Activated CD4-positive, alpha-beta T cell treated with anti-CD3 and anti-CD28 coated beads for 36 hours (primary cell): ENCODE measurements at regions of chr5 and their contacts with region 1.

Region 1: DNA sequence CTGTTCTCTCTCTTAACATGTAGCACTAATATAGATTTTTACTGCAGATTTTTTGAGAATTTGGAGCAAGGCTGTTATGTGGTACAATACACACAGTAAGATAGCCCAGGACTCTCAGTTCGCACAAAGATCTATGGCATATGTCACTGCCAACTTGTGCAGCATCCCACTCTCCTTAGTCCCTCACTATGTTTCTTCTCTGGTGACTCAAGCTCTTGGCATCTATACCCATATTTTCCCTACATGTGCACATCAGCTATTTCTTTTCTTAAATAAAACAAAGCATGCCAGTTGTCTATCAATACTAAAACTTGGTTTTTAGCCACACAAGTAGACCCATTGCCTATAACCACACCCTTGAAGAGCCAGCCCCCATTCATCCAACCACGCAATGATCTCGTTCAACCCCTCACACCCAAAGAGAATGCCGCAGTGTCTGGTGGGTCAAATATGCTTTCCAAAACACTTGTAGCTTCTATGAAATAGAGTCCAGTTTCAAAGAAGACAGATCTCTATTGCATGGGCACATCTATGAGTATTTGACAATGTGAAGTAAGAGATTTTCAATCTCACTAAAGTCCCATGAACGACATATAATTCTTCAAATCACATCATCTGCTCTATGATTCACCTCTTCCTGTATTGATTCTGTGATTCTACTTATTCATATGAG is 18.2 kb upstream of the IL7R start:
- DNase-seq: peak; percentile 69
- ATAC-seq: peak; percentile 65
- H3K4me3 Mint-ChIP-seq: peak overlapping the region; percentile 61
- H3K27ac Mint-ChIP-seq: peak overlapping the region; percentile 99
- H3K4me1 Mint-ChIP-seq: peaks cover 78% of the 10 kb centered on the region
- H3K27me3 Mint-ChIP-seq: no peaks in the 10 kb centered on the region

Region 2: DNA sequence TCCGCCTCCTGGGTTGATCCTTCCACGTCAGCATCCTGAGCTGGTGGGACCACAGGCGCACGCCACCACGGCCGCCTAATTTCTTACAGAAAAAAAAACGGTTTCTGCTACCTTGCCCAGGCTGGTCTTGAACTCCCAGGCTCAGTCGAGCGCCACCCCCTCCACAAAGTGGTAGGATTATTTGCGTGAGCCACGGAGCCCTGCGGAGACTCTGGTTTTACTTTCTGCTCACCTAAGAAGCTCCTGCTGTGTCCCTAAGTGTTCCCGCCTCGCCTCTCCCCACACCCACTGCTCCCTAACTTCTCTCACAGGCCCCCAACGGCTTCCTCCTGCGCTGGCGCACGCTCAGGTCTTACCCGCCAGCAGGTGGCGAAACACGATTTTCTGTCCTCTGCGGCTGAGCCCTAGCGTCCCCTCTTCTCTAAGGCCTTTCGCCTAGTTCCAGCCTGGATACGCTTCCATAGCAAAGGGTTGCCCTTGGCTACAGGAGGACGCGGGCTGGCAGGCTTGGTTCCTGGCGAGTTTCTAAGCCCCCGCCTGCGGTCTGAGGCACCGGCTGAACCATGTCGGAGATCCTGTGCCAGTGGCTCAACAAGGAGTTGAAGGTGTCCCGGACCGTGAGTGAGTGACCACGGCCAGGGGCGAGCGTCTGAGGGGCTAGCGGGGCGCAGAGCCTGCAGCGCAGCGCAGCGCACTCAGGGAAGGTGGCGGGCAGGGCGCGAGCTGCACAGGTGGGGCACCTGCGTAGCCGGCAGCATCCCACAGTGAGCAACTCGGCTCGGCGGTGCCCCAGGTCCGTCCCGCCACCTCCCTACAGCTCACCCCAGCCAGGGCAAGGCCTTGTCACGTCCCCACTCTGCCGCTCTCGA is 220.8 kb before region 1 on chr5 and contains the start of gene SPEF2:
- CTCF ChIA-PET with region 1: no interaction called
- POLR2A ChIA-PET with region 1: no interaction called
- intact Hi-C with region 1: loop called in 1 of 2 experiments (anchors 5 kb)
- DNase-seq: peak; percentile 91
- ATAC-seq: peak; percentile 92
- H3K4me3 Mint-ChIP-seq: peak within 1 kb of the TSS; percentile 83
- H3K27ac Mint-ChIP-seq: peak within 1 kb of the TSS; percentile 99
- H3K4me1 Mint-ChIP-seq: peaks cover 31% of the 10 kb centered on the region
- H3K27me3 Mint-ChIP-seq: no peaks in the 10 kb centered on the region
- total RNA-seq, gene SPEF2: 14.1 to 14.6 TPM

Region 3: DNA sequence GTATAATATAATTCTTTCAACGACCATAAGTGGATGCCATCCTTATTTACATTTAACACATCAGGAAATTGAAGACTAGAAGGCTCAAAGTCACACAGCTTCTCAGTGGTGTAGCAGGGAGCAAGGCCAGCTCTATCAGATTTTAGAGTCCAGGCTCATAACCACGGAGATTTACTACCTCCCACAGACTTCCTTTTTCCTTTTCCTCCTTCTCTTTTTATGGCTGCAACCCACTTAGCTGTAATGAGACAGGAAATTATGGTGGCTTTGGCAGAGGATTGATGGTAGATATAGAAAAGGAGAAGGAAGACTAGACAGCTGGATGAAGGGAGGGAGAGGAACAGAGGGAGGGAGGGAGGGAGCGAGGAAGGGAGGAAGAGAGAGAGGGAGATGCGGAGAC is 173.4 kb before region 1 on chr5:
- CTCF ChIA-PET with region 1: no interaction called
- POLR2A ChIA-PET with region 1: no interaction called
- intact Hi-C with region 1: loop called in 1 of 2 experiments (anchors 5 kb)
- DNase-seq: no peak
- ATAC-seq: no peak
- H3K4me3 Mint-ChIP-seq: no peak overlapping the region
- H3K27ac Mint-ChIP-seq: peak overlapping the region; percentile 7
- H3K4me1 Mint-ChIP-seq: peaks cover 55% of the 10 kb centered on the region
- H3K27me3 Mint-ChIP-seq: no peaks in the 10 kb centered on the region

Region 4: GRCh38 chr5:35794684-35795375 is 43.7 kb before region 1 on chr5:
- CTCF ChIA-PET with region 1: no interaction called
- POLR2A ChIA-PET with region 1: interaction called, 13 read pairs
- intact Hi-C with region 1: loop called in 1 of 2 experiments (anchors 1 kb)
- DNase-seq: peak; percentile 45
- ATAC-seq: peak; percentile 40
- H3K4me3 Mint-ChIP-seq: peak overlapping the region; percentile 25
- H3K27ac Mint-ChIP-seq: peak overlapping the region; percentile 91
- H3K4me1 Mint-ChIP-seq: peaks cover 90% of the 10 kb centered on the region
- H3K27me3 Mint-ChIP-seq: no peaks in the 10 kb centered on the region

Region 5: GRCh38 chr5:35822511-35822910 is 16.0 kb before region 1 on chr5:
- CTCF ChIA-PET with region 1: interaction called, 24 read pairs
- POLR2A ChIA-PET with region 1: interaction called, 8 read pairs
- intact Hi-C with region 1: loop called in 1 of 2 experiments (anchors 1 kb)
- DNase-seq: peak; percentile 63
- ATAC-seq: no peak
- H3K4me3 Mint-ChIP-seq: peak overlapping the region; percentile 58
- H3K27ac Mint-ChIP-seq: peak overlapping the region; percentile 98
- H3K4me1 Mint-ChIP-seq: peaks cover 89% of the 10 kb centered on the region
- H3K27me3 Mint-ChIP-seq: no peaks in the 10 kb centered on the region

Region 6: GRCh38 chr5:36657563-36657995 is 819.1 kb after region 1 on chr5:
- CTCF ChIA-PET with region 1: no interaction called
- POLR2A ChIA-PET with region 1: no interaction called
- intact Hi-C with region 1: no loop called
- DNase-seq: no peak
- ATAC-seq: no peak
- H3K4me3 Mint-ChIP-seq: no peak overlapping the region
- H3K27ac Mint-ChIP-seq: no peak overlapping the region
- H3K4me1 Mint-ChIP-seq: no peaks in the 10 kb centered on the region
- H3K27me3 Mint-ChIP-seq: peaks cover 8% of the 10 kb centered on the region